Caco-2 (cell line): ENCODE measurements at regions of chr1 and their contacts with region 1.

Region 1: DNA sequence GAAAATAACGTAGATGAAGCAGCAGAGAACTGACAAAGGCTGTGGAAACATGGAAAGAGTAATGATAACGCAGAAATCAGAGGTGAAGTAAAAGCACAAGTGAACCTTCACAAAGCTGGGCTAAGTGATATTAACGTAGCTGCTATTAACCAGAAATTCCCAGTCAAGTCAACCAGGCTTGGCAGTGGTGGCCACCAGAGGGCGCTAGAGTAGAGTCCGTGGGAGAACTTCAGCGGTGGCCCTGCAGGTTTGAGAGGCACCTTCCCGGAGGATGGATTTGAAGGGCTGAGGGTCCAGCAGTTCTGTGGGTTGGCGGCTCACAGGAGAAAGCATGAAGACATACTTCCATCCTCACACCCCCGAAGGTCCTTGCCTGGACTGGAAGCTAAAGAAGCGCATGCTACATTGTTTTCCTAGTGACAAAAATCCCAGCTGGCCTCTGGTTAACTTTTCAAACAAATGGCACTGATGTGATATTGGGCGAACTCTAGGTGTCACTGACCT is 81.7 kb upstream of the ZNF648 start:
- DNase-seq: peak; percentile 87 to 92
- H3K4me3 ChIP-seq: no peak overlapping the region
- H3K4me3 Mint-ChIP-seq: no peak overlapping the region
- H3K27ac Mint-ChIP-seq: peak overlapping the region; percentile 63
- H3K4me1 ChIP-seq: peaks cover 34% of the 10 kb centered on the region
- H3K4me1 Mint-ChIP-seq: peaks cover 48% of the 10 kb centered on the region
- H3K27me3 ChIP-seq: no peaks in the 10 kb centered on the region
- H3K27me3 Mint-ChIP-seq: no peaks in the 10 kb centered on the region
- CTCF ChIP-seq: peak; percentile 92 to 97

Region 2: DNA sequence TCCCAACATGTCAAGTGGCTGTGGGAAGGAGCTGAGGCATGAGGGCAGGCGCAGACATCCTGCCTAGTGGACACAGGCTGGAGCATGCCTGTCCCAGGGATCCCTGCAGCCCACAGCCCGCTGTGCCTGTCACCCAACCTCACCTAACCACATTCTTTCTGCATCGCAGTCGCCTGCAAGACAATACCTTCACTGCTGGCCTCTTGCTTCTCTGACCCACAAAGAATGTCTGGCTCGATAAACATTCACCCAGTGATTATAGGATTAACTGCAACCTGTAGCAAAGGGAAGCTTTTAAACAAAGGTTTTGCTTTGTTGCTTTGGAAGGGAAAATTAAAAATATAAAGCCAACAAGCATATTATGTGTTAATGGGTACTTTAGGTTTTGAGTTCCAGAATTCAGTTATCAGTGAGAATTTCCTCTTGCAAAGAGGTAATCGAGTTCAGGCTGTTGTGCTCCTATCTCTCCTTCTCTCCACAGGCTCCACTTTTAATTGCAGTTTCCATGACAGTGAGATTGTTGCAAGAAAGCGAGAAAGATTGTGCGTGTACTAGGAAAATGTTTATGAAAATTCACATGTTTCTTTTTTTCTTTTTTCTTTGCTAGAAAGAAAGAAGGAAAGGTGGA is 41.7 kb before region 1 on chr1:
- CTCF ChIA-PET with region 1: no interaction called
- POLR2A ChIA-PET with region 1: no interaction called
- intact Hi-C with region 1: loop called (anchors 1 kb)
- DNase-seq: peak; percentile 93 to 97
- H3K4me3 ChIP-seq: no peak overlapping the region
- H3K4me3 Mint-ChIP-seq: peak overlapping the region; percentile 71
- H3K27ac Mint-ChIP-seq: peak overlapping the region; percentile 98
- H3K4me1 ChIP-seq: peaks cover 38% of the 10 kb centered on the region
- H3K4me1 Mint-ChIP-seq: peaks cover 47% of the 10 kb centered on the region
- H3K27me3 ChIP-seq: no peaks in the 10 kb centered on the region
- H3K27me3 Mint-ChIP-seq: no peaks in the 10 kb centered on the region
- CTCF ChIP-seq: no peak

Region 3: GRCh38 chr1:182175361-182175931 is 32.2 kb after region 1 on chr1:
- CTCF ChIA-PET with region 1: no interaction called
- POLR2A ChIA-PET with region 1: no interaction called
- intact Hi-C with region 1: no loop called
- DNase-seq: peak in 1 of 2 experiments; percentile 19
- H3K4me3 ChIP-seq: no peak overlapping the region
- H3K4me3 Mint-ChIP-seq: no peak overlapping the region
- H3K27ac Mint-ChIP-seq: no peak overlapping the region
- H3K4me1 ChIP-seq: no peaks in the 10 kb centered on the region
- H3K4me1 Mint-ChIP-seq: peaks cover 5% of the 10 kb centered on the region
- H3K27me3 ChIP-seq: no peaks in the 10 kb centered on the region
- H3K27me3 Mint-ChIP-seq: no peaks in the 10 kb centered on the region
- CTCF ChIP-seq: no peak

Region 4: DNA sequence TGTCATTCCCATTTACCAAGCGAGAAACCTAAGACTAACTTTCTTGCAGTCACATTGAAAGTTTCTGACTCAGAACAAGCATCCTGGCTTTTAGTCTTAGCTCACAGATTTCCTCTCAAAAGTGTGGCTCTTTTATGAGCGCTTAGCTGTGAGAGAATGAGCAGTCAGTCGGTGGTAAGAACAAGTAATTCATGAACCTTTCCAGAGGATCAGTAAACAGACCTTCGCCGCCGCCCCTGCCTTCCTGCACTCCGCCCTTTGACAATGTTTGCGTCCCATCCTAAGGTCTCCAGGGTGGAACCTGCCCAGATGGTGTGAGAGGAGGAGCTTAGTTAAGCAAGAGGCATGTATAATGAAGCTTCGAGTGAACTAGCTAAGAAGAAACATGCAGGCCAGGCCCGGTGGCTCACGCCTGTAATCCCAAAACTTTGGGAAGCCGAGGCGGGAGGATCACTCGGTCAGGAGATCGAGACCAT is 106.0 kb after region 1 on chr1:
- CTCF ChIA-PET with region 1: interaction called, 18 read pairs
- POLR2A ChIA-PET with region 1: no interaction called
- intact Hi-C with region 1: loop called (anchors 5 kb)
- DNase-seq: peak; percentile 80 to 88
- H3K4me3 ChIP-seq: no peak overlapping the region
- H3K4me3 Mint-ChIP-seq: peak overlapping the region; percentile 44
- H3K27ac Mint-ChIP-seq: peak overlapping the region; percentile 59
- H3K4me1 ChIP-seq: peaks cover 25% of the 10 kb centered on the region
- H3K4me1 Mint-ChIP-seq: peaks cover 22% of the 10 kb centered on the region
- H3K27me3 ChIP-seq: no peaks in the 10 kb centered on the region
- H3K27me3 Mint-ChIP-seq: no peaks in the 10 kb centered on the region
- CTCF ChIP-seq: no peak

Region 5: DNA sequence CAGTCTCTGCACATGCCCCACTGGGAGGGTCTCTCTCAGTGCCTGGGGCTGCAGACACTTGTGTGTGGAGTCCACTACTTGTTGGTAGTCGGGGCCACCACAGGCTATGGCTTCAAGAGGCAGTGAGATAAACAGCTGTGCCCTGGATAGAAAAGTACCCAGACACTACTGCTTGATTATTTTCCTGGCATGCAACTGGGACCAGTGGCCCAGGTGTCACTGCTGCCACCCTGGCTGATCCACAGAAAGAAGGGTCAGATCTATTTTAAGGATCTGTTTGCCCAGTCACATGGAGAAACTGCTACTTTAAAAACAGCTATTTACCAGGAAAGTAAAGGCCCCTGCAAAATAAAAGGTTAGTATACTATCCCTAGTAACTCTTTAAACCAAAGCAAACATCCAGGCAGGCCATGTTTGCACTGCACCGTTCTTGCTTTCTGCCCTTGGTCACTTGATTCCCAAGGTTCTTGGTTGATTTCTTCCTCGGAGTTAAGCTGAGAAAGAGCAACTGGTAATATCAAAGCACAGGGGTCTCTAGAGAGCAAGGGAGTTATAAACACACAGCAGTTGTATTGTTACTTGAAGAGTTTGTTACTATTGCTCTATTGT is 148.5 kb after region 1 on chr1:
- CTCF ChIA-PET with region 1: interaction called, 5 read pairs
- POLR2A ChIA-PET with region 1: no interaction called
- intact Hi-C with region 1: loop called (anchors 1 kb)
- DNase-seq: peak in 1 of 2 experiments; percentile 22
- H3K4me3 ChIP-seq: no peak overlapping the region
- H3K4me3 Mint-ChIP-seq: no peak overlapping the region
- H3K27ac Mint-ChIP-seq: peak overlapping the region; percentile 67
- H3K4me1 ChIP-seq: peaks cover 57% of the 10 kb centered on the region
- H3K4me1 Mint-ChIP-seq: peaks cover 47% of the 10 kb centered on the region
- H3K27me3 ChIP-seq: no peaks in the 10 kb centered on the region
- H3K27me3 Mint-ChIP-seq: no peaks in the 10 kb centered on the region
- CTCF ChIP-seq: no peak

Region 6: GRCh38 chr1:182301467-182302198 is 158.4 kb after region 1 on chr1:
- CTCF ChIA-PET with region 1: interaction called, 8 read pairs
- POLR2A ChIA-PET with region 1: no interaction called
- intact Hi-C with region 1: loop called (anchors 5 kb)
- DNase-seq: peak; percentile 50 to 61
- H3K4me3 ChIP-seq: no peak overlapping the region
- H3K4me3 Mint-ChIP-seq: no peak overlapping the region
- H3K27ac Mint-ChIP-seq: peak overlapping the region; percentile 29
- H3K4me1 ChIP-seq: peaks cover 30% of the 10 kb centered on the region
- H3K4me1 Mint-ChIP-seq: peaks cover 31% of the 10 kb centered on the region
- H3K27me3 ChIP-seq: no peaks in the 10 kb centered on the region
- H3K27me3 Mint-ChIP-seq: no peaks in the 10 kb centered on the region
- CTCF ChIP-seq: no peak

Region 7: DNA sequence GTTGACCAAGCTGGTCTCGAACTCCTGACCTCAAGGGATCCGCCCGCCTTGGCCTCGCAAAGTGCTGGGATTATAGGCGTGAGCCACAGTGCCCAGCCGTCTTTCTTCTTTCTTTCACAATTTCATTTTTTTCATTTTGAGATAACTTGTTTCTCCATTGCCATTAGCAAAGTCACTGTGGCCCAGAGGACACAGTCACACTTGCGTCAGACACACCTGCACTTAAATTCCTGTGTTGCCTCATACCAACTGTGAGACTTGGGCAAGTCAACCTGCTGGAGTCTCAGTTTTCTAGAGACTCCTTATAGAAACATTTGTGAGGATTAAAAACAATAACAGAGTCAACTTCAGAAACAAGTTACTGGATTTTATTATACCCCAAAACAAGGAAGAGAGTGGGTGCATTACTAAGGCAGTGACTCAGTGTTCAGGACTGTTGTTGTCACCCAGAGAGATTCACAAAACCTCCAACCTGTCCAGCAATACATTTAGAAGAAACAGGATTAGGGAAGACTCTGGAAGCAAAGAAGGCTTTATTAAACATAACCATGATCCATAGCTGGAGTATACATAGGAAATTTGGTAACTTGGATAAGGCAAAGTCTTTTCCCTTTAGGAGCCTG is 254.7 kb after region 1 on chr1:
- CTCF ChIA-PET with region 1: interaction called, 38 read pairs
- POLR2A ChIA-PET with region 1: interaction called, 3 read pairs
- intact Hi-C with region 1: loop called (anchors 1 kb)
- DNase-seq: peak in 1 of 2 experiments; percentile 34
- H3K4me3 ChIP-seq: no peak overlapping the region
- H3K4me3 Mint-ChIP-seq: no peak overlapping the region
- H3K27ac Mint-ChIP-seq: peak overlapping the region; percentile 62
- H3K4me1 ChIP-seq: peaks cover 23% of the 10 kb centered on the region
- H3K4me1 Mint-ChIP-seq: peaks cover 35% of the 10 kb centered on the region
- H3K27me3 ChIP-seq: no peaks in the 10 kb centered on the region
- H3K27me3 Mint-ChIP-seq: no peaks in the 10 kb centered on the region
- CTCF ChIP-seq: no peak